ENCODE measurements at regions of chr2 and their contacts with region 1.

Region 1: DNA sequence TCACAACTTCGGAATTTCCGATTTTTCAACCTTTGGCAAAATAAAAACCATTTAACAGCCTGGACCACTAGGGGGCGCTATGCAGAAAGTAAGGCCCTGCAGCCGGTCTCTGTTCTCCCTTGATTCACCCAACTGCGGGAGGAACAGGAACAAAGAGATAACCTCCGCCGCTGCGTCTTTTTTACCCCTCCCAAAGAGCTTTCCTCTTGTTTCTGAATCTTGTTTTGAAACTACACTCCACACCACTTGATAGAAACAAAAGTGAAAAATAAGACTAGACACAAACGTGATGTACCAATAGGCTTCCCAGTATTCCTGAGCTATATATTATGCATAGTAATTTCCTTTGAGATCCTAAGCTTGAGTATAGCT is 231.2 kb downstream of the MYO3B start:
- DNase-seq: peak; percentile 52
- H3K4me3 Mint-ChIP-seq: peak overlapping the region; percentile 45
- H3K27ac Mint-ChIP-seq: no peak overlapping the region
- H3K4me1 Mint-ChIP-seq: peaks cover 8% of the 10 kb centered on the region
- H3K27me3 Mint-ChIP-seq: peaks cover 10% of the 10 kb centered on the region

Region 2: GRCh38 chr2:170235860-170236679 is 173.1 kb before region 1 on chr2:
- intact Hi-C with region 1: loop called (anchors 5 kb)
- DNase-seq: no peak
- H3K4me3 Mint-ChIP-seq: no peak overlapping the region
- H3K27ac Mint-ChIP-seq: no peak overlapping the region
- H3K4me1 Mint-ChIP-seq: no peaks in the 10 kb centered on the region
- H3K27me3 Mint-ChIP-seq: peaks cover 21% of the 10 kb centered on the region

Region 3: GRCh38 chr2:170396799-170397459 is 12.2 kb before region 1 on chr2:
- intact Hi-C with region 1: no loop called
- DNase-seq: no peak
- H3K4me3 Mint-ChIP-seq: no peak overlapping the region
- H3K27ac Mint-ChIP-seq: no peak overlapping the region
- H3K4me1 Mint-ChIP-seq: no peaks in the 10 kb centered on the region
- H3K27me3 Mint-ChIP-seq: peaks cover 33% of the 10 kb centered on the region

Region 4: GRCh38 chr2:170601489-170601888 is 192.3 kb after region 1 on chr2:
- intact Hi-C with region 1: loop called (anchors 5 kb)
- DNase-seq: no peak
- H3K4me3 Mint-ChIP-seq: no peak overlapping the region
- H3K27ac Mint-ChIP-seq: no peak overlapping the region
- H3K4me1 Mint-ChIP-seq: no peaks in the 10 kb centered on the region
- H3K27me3 Mint-ChIP-seq: peaks cover 7% of the 10 kb centered on the region

Region 5: GRCh38 chr2:170707821-170708795 is 299.0 kb after region 1 on chr2:
- intact Hi-C with region 1: loop called (anchors 5 kb)
- DNase-seq: no peak
- H3K4me3 Mint-ChIP-seq: no peak overlapping the region
- H3K27ac Mint-ChIP-seq: no peak overlapping the region
- H3K4me1 Mint-ChIP-seq: peaks cover 7% of the 10 kb centered on the region
- H3K27me3 Mint-ChIP-seq: peaks cover 65% of the 10 kb centered on the region

Measured in activated T-helper 1 cell treated with anti-CD3 and anti-CD28 coated beads, Interleukin-12 subunit alpha, Interleukin-12 subunit beta, Interleukin-2, Interleukin-4 antibody, amounts not matched to agents 30 ng/mL and 10 ng/mL and 1 ng/mL, durations not matched to agents 14 hours and 24 hours and 36 hours (primary cell).